PC-9 (cell line): ENCODE measurements at regions of chr4 and their contacts with region 1.

Region 1: GRCh38 chr4:16264798-16265197 is 38.5 kb upstream of the TAPT1 start:
- DNase-seq: no peak
- H3K4me3 ChIP-seq: no peak overlapping the region
- H3K27ac ChIP-seq: no peak overlapping the region
- H3K4me1 ChIP-seq: no peaks in the 10 kb centered on the region
- H3K27me3 ChIP-seq: no peaks in the 10 kb centered on the region
- CTCF ChIP-seq: peak; percentile 53

Region 2: GRCh38 chr4:15702941-15703403 is 561.8 kb before region 1 on chr4 and contains the start of gene BST1:
- CTCF ChIA-PET with region 1: no interaction called
- POLR2A ChIA-PET with region 1: no interaction called
- intact Hi-C with region 1: no loop called
- DNase-seq: no peak
- H3K4me3 ChIP-seq: no peak within 1 kb of the TSS
- H3K27ac ChIP-seq: no peak within 1 kb of the TSS
- H3K4me1 ChIP-seq: no peaks in the 10 kb centered on the region
- H3K27me3 ChIP-seq: no peaks in the 10 kb centered on the region
- CTCF ChIP-seq: no peak
- total RNA-seq, gene BST1: 0.31 TPM in 1 of 2 replicates, not detected in the other

Region 3: DNA sequence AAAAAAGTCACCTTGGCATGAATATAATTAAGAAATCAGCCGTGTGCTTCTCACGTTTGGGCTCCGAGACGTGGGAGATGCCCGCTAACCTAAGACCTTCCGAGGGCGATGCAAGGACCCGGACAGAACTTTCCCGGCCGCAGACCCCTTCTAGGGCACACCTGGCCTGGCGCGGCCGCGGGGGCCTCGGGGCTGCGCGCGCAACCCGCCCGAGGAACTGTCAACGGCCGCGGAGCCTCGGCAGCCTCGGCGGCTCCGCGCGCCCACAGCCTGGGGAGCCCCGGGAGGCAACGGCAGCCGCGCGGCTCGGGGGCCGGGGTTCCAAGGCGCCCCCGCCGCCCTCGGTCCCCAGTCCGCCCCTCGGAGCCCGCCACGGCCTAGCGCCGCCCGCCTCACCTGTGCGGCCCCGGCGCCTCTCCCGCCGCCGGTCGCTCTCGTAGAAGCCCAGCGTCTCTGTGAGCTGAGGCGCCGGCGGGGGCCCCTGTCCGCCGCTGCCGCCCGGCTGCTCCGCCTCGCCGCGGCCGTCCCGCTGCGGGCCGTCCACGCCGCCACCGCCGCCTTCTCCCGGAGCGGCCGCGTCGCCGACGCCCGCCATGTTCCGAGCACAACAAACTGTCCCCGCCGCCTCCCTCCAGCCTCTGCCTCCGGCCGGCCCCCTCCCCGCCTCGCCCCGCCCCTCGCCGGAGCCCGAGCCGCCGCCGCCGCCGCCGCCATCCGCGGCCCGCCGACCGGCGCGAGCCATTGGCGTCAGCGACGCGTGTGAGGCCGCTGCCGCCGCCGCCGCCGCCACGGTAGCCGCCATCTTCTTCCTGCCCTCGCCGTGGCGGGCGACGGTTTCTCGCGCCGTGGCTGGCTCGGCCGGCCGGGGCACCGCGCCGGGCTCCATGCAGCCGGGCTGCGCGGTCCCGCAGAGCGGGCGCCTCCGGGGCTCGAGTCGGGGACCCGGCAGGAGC is 38.7 kb before region 1 on chr4 and contains the start of gene TAPT1:
- CTCF ChIA-PET with region 1: interaction called, 3 read pairs
- POLR2A ChIA-PET with region 1: no interaction called
- intact Hi-C with region 1: loop called (anchors 5 kb)
- DNase-seq: peak in 1 of 2 experiments; percentile 77
- H3K4me3 ChIP-seq: peak within 1 kb of the TSS; percentile 73
- H3K27ac ChIP-seq: peak within 1 kb of the TSS; percentile 54
- H3K4me1 ChIP-seq: peaks cover 18% of the 10 kb centered on the region; the same call in 1 of the 2 replicates
- H3K27me3 ChIP-seq: no peaks in the 10 kb centered on the region
- CTCF ChIP-seq: no peak
- total RNA-seq, gene TAPT1: 13.0 and 13.8 TPM in 2 replicates